Mucosa of descending colon (tissue), 3 donors: ENCODE measurements at regions of chr12 and their contacts with region 1.

Region 1: GRCh38 chr12:3885277-3886094 is 12.3 kb upstream of the PARP11 start:
- DNase-seq: peak in 1 of 3 donors; percentile 43
- ATAC-seq: peak; percentile 51
- H3K4me3 ChIP-seq: peak overlapping the region; percentile 3
- H3K4me1 ChIP-seq: no peaks in the 10 kb centered on the region
- CTCF ChIP-seq: peak; percentile 54

Region 2: DNA sequence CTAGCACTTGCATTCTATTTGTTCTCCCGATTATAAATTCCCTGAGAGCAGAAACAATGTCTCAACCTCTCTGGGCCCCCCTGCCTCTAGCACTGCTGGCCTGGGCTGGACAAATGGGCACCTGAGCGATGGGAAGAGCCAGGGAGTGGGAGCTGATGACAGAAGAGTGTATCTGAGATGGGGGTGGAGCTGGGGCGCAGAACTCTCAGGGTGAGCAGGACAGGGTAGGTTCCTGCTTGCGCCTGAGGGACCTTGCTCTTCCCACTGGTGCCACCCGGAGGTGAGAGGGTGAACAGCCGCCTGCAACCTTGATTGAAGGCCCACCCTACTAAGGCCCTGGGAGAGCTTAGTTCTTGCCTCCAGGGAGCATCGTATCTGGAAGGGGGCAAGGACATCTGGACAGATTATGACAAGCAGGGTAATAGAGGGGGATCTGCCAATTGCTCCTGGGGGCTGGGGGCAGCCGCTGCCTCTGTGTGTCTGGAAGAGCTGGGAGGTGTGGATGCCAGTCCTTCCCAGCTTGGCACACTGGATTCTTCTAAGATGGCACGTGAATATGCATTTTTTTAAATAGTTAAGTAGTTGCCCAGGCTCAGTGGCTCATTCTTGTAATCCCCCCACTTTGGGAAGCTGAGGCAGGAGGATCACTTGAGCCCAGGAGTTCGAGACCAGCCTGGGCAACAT is 851.3 kb before region 1 on chr12:
- intact Hi-C with region 1: no loop called
- DNase-seq: peak in 2 of 3 donors; percentile 66 to 69
- ATAC-seq: peak; percentile 83
- H3K4me3 ChIP-seq: no peak overlapping the region
- H3K4me1 ChIP-seq: no peaks in the 10 kb centered on the region
- CTCF ChIP-seq: peak; percentile 31

Region 3: DNA sequence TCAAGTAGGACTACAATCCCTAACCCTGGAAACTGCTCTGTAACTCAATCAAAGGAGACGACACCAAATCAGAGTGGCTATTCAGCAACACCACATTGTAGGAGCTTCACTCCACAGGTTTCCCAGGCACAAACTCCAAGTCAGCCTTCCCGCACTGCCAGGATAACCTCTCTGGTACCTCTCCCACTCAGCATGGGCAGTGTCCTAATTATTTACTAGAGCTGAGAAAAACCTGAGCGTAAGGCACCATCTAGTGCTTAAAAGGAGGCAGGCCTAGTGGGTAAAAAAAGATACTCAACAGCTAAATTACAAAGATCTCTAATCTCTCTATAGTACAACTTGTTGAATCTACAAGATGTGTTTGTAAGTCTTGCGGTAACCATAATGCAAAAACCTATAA is 48.4 kb before region 1 on chr12:
- intact Hi-C with region 1: no loop called
- DNase-seq: no peak
- ATAC-seq: no peak
- H3K4me3 ChIP-seq: no peak overlapping the region
- H3K4me1 ChIP-seq: no peaks in the 10 kb centered on the region
- CTCF ChIP-seq: no peak

Region 4: GRCh38 chr12:4030929-4031702 is 145.6 kb after region 1 on chr12:
- intact Hi-C with region 1: loop called (anchors 5 to 10 kb)
- DNase-seq: peak; percentile 86 to 91 (median 90)
- ATAC-seq: peak; percentile 97
- H3K4me3 ChIP-seq: peak overlapping the region; percentile 3
- H3K4me1 ChIP-seq: peaks cover 12% of the 10 kb centered on the region
- CTCF ChIP-seq: no peak

Region 5: GRCh38 chr12:4037747-4038312 is 152.3 kb after region 1 on chr12:
- intact Hi-C with region 1: loop called (anchors 5 to 10 kb)
- DNase-seq: peak in 1 of 3 donors; percentile 89
- ATAC-seq: peak; percentile 46
- H3K4me3 ChIP-seq: no peak overlapping the region
- H3K4me1 ChIP-seq: peaks cover 17% of the 10 kb centered on the region
- CTCF ChIP-seq: peak; percentile 47

Region 6: DNA sequence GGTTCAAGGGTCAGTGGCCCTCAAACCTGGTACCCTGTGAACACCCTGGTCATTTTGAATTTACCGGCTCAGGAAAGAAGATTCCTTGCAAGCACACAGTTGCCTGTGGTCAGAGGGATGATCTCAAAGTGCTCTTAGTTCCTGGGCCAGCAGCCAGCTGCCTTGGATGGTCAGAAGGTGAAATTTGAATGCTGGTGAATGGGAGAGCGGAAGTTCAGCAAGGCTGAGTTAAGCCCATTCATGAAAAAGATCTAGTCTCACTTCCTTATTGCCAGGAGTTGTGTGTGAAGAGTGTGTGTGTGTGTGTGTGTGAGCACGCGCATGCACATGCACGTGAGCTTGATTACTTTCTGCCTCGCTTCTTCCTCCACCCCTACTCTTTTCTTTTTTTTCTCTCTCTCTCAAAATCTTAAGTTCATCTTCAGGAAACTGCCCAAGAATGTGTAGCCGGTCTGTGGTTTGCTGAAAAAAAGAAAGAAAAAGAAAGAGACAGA is 232.6 kb after region 1 on chr12:
- intact Hi-C with region 1: no loop called
- DNase-seq: peak; percentile 82 to 88 (median 82)
- ATAC-seq: peak; percentile 89
- H3K4me3 ChIP-seq: no peak overlapping the region
- H3K4me1 ChIP-seq: peaks cover 35% of the 10 kb centered on the region
- CTCF ChIP-seq: no peak

Region 7: DNA sequence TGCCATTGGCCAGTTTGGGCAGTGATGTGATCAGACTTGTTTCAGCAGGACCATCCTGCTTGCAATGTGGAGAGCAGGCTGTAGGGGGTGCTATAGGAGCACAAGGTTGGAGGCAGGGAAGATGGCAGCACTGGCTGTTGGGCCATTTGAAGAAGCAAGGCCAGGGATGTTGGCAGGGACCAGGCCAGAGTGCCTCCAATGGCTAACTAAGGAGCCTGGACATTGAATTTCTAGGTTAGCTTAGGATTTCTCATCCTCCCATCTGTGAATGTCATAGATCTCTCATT is 470.5 kb after region 1 on chr12:
- intact Hi-C with region 1: no loop called
- DNase-seq: peak in 2 of 3 donors; percentile 49 to 56
- ATAC-seq: peak; percentile 49
- H3K4me3 ChIP-seq: no peak overlapping the region
- H3K4me1 ChIP-seq: no peaks in the 10 kb centered on the region
- CTCF ChIP-seq: peak; percentile 23